Common myeloid progenitor, CD34-positive (primary cell): ENCODE measurements at regions of chr13 and their contacts with region 1.

Region 1: DNA sequence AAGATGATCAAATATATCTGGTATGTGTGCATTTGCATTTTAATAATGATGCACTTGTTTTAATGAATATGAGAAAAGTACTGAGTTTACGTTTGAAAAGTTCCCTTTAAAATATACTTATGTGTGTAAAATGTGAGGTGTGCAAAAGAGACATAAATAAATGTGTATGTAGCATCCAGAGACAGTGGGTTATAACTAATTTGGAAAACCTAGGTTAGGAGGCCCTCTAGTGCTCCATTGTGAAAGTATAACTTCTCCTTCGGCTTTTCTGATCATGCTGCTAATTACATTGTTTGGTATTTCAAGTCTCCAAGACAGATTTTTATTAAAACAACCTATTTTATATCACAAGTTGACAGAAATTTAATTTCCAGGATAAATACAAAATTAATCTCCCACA is 30.1 kb downstream of the SCEL start:
- DNase-seq: peak; percentile 28 to 69 (median 61)
- H3K4me3 ChIP-seq: no peak overlapping the region
- H3K27ac ChIP-seq: no peak overlapping the region
- H3K4me1 ChIP-seq: no peaks in the 10 kb centered on the region
- H3K27me3 ChIP-seq: no peaks in the 10 kb centered on the region

Region 2: DNA sequence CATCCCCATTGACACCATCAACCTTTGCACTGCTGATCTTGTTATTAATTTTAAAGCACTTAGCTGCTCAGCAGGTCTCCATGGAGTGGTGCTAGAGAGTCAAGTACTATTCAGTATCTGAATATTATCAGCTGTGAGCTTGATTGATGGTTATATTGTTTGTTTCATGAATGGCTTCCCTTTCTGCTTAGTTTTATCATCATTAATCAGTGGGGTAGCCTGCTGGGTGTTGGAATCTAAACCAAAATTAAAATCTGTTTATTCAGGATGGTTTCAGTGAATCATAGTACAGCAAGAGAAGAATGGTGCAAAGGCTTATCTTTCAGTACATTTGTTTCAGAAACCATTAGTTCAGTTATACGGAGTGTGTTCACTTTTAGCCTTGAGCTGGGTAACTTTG is 72.7 kb before region 1 on chr13:
- CTCF ChIA-PET with region 1: interaction called, 17 read pairs
- POLR2A ChIA-PET with region 1: no interaction called
- DNase-seq: peak; percentile 30 to 57 (median 51)
- H3K4me3 ChIP-seq: no peak overlapping the region
- H3K27ac ChIP-seq: no peak overlapping the region
- H3K4me1 ChIP-seq: no peaks in the 10 kb centered on the region
- H3K27me3 ChIP-seq: no peaks in the 10 kb centered on the region

Region 3: DNA sequence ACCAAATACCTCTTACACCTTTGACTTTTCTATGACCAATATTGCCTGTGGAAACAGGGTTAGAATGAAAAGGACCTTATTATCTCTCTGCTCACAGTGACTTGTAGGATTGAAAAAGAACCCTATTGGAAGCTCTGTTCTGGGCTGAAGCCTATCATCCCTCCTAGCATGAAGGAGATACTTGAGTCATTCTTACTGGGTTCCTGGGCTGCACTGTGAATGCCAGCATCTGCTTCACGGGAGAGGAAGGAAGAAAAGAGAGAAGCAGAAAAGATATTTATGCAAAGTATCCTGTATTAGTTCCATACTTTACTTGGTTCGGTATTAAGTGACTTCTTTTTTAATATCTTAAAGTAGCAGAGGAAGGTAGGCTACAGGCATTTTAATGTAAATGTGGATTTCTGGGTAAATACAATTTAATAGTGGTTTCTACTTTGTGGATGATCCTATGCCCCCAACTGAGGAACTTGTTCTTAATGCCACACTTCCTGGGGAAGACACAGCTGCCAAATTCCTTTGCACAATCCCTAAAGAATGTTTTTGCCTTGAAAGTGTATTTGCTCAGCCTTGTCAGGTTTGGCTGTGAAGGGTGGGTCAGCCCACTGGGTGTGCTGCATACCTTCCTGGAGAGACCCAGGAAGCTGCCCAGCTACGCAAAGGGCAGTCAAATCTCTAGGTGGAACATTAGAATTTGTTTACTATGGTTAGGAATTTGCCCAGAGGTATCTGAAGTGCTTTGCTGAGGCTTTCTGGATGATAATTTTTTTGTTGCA is 43.9 kb before region 1 on chr13:
- CTCF ChIA-PET with region 1: no interaction called
- POLR2A ChIA-PET with region 1: no interaction called
- DNase-seq: no peak
- H3K4me3 ChIP-seq: no peak overlapping the region
- H3K27ac ChIP-seq: no peak overlapping the region
- H3K4me1 ChIP-seq: no peaks in the 10 kb centered on the region
- H3K27me3 ChIP-seq: no peaks in the 10 kb centered on the region